Activated CD8-positive, alpha-beta memory T cell treated with anti-CD3 and anti-CD28 coated beads, Interleukin-2, amount 10 ng/mL, durations not matched to agents 7 days and 5 days (primary cell): ENCODE measurements at regions of chr6 and their contacts with region 1.

Region 1: GRCh38 chr6:31940256-31940664 is 5.6 kb upstream of the CFB start:
- DNase-seq: no peak
- ATAC-seq: no peak
- H3K4me3 Mint-ChIP-seq: no peak overlapping the region
- H3K27ac Mint-ChIP-seq: no peak overlapping the region
- H3K4me1 Mint-ChIP-seq: peaks cover under 1% of the 10 kb centered on the region
- H3K27me3 Mint-ChIP-seq: peaks cover 25% of the 10 kb centered on the region

Region 2: DNA sequence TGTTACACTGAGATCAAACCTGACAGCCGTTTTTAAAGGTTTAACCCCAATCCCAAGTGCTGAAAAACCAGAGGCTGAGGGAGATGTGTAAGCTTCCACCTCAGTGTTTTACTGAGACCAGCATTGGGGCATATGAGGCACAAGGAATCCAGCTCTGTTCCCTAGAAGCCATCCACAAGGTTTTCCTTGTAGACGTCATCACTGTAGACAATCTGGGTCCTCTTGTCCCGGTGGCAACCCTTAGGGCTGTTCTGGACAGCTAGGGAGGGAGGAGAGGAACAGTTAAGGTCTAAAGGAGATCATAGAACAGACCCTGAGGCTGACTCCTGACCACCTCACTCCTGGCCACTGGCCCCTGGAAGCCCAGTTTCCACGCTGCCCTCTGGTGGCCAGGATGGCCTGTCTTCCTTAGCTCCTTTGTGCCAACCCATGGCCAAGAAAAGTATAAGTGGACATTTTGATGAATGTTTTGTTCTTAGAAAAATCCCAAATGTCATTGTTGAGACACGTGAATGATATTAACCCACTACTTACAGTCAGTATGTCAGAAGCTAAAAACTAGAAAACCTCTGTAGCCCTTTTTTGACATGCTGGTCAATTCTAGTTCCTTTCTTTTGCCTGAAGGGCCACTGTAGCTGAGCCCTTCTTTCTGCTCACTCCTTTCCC is 12.0 kb after region 1 on chr6:
- CTCF ChIA-PET with region 1: interaction called, 12 read pairs
- DNase-seq: peak; percentile 51
- ATAC-seq: peak; percentile 63
- H3K4me3 Mint-ChIP-seq: no peak overlapping the region
- H3K27ac Mint-ChIP-seq: no peak overlapping the region
- H3K4me1 Mint-ChIP-seq: peaks cover 4% of the 10 kb centered on the region
- H3K27me3 Mint-ChIP-seq: no peaks in the 10 kb centered on the region

Region 3: GRCh38 chr6:31971993-31972708 is 31.9 kb after region 1 on chr6 and contains the start of gene DXO:
- CTCF ChIA-PET with region 1: no interaction called
- DNase-seq: peak; percentile 99
- ATAC-seq: peak; percentile 91
- H3K4me3 Mint-ChIP-seq: peak within 1 kb of the TSS; percentile 96
- H3K27ac Mint-ChIP-seq: peak within 1 kb of the TSS; percentile 100
- H3K4me1 Mint-ChIP-seq: peaks cover 34% of the 10 kb centered on the region
- H3K27me3 Mint-ChIP-seq: no peaks in the 10 kb centered on the region
- total RNA-seq, gene DXO: 17.4 to 18.7 TPM